ENCODE measurements at regions of chr3 and their contacts with region 1.

Region 1: GRCh38 chr3:46923559-46924350 is 46.2 kb downstream of the PTH1R start:
- DNase-seq: peak; percentile 62
- H3K4me3 Mint-ChIP-seq: no peak overlapping the region
- H3K27ac Mint-ChIP-seq: peak overlapping the region; percentile 64
- H3K4me1 Mint-ChIP-seq: peaks cover 41% of the 10 kb centered on the region
- H3K27me3 Mint-ChIP-seq: no peaks in the 10 kb centered on the region

Region 2: DNA sequence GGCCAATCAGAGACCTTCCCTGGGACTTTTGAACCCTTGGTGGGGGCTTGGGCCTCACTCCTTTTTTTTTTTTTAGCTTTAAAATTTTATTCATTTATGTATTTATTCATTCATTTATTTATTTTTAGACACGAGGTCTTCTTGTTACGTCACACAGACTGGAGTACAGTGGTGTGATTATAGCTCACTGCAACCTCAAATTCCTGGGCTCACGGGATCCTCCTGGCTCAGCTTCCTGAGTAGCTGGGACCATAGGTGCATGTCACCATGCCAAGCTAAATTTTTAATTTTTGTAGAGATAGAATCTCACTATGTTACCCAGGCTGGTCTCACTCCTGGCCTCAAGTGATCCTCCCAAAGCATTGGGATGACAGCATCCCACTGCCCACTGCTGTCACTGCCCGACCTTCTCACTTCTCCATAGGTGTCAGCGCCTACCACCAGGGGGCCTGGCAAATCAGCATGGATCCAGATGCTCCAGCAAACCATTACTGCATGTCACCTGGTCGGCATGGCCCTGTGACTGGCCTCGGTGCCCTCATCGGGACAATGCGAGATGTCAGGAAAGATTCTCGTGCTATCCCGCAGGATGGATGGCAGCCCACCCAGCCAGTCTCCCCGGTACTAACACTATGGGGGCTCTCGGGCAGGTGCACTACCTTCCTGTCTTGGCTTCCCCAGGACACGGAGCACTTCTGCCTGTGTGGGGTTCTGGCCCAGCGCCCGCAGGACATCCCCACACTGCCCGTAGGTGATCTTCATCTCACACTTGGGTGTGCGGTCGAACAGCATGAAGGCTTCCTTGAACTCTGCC is 63.5 kb before region 1 on chr3:
- CTCF ChIA-PET with region 1: no interaction called
- DNase-seq: peak; percentile 52
- H3K4me3 Mint-ChIP-seq: no peak overlapping the region
- H3K27ac Mint-ChIP-seq: no peak overlapping the region
- H3K4me1 Mint-ChIP-seq: no peaks in the 10 kb centered on the region
- H3K27me3 Mint-ChIP-seq: peaks cover 42% of the 10 kb centered on the region

Region 3: DNA sequence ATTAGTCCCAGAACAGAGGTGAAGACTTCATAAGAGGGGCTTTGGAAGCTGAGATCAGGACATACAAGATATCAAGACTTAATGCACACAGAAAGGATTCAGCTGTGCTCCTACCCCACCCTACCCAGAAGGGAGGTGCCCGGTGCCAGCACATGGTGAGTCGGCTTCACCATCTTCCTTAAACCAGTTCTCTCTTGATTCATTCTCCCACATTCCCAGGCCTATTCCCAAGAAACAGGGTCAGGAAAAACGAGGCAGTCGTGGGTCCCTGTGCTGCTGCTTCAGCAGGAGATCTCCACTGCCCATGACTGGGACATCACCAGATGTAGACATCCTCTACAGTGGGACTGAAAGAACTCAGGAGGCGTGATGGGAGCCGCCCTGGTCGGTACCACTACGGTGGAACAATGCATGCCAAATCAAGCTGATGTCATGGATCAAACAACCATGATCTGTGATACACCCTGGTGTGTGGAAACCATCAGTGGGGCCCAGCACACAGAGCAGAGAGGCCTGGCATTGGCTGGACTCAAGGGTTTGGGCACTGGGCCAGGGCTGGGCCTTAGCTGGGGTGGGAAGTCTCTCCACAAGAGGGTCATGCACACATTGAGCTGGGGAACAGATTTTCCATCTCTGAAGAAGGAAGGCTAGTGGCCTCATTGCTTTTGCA is 10.9 kb after region 1 on chr3:
- CTCF ChIA-PET with region 1: interaction called, 11 read pairs
- DNase-seq: no peak
- H3K4me3 Mint-ChIP-seq: no peak overlapping the region
- H3K27ac Mint-ChIP-seq: no peak overlapping the region
- H3K4me1 Mint-ChIP-seq: peaks cover 50% of the 10 kb centered on the region
- H3K27me3 Mint-ChIP-seq: no peaks in the 10 kb centered on the region

Region 4: DNA sequence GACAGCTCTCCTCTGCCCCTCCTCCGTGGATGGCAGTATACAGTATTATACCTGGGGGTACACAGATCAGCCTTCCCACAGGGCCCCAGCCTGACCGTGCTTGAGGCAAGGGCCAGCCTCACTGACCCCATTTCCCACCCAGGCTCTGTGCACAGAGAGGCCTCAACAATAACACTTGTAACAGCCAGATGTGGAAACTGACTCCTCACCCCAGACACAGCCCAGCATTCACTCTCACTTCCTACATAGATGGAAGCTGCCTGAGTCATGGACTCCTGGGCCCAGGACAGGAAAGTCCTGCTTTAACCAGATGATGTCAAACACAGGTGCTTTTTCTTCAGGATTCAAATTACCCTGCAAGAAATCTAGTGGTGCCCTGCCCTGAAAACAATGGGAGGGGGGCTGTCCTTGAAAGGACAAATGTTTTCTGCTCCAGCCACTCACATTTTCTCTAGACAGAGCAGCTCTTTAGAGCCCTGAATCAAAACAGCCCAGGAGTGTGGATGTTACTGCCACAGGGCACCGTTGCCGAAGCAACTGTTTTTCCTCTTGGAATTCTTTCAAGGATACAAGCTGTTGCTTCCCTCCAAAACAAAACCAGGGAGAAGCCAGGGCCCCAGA is 36.4 kb after region 1 on chr3:
- CTCF ChIA-PET with region 1: interaction called, 10 read pairs
- DNase-seq: no peak
- H3K4me3 Mint-ChIP-seq: no peak overlapping the region
- H3K27ac Mint-ChIP-seq: peak overlapping the region; percentile 25
- H3K4me1 Mint-ChIP-seq: peaks cover 60% of the 10 kb centered on the region
- H3K27me3 Mint-ChIP-seq: no peaks in the 10 kb centered on the region

Region 5: GRCh38 chr3:46976326-46977190 is 52.8 kb after region 1 on chr3 and contains the start of gene CCDC12:
- CTCF ChIA-PET with region 1: interaction called, 10 read pairs
- DNase-seq: peak; percentile 96
- H3K4me3 Mint-ChIP-seq: peak within 1 kb of the TSS; percentile 98
- H3K27ac Mint-ChIP-seq: peak within 1 kb of the TSS; percentile 95
- H3K4me1 Mint-ChIP-seq: peaks cover 74% of the 10 kb centered on the region
- H3K27me3 Mint-ChIP-seq: peaks cover 5% of the 10 kb centered on the region

Region 6: DNA sequence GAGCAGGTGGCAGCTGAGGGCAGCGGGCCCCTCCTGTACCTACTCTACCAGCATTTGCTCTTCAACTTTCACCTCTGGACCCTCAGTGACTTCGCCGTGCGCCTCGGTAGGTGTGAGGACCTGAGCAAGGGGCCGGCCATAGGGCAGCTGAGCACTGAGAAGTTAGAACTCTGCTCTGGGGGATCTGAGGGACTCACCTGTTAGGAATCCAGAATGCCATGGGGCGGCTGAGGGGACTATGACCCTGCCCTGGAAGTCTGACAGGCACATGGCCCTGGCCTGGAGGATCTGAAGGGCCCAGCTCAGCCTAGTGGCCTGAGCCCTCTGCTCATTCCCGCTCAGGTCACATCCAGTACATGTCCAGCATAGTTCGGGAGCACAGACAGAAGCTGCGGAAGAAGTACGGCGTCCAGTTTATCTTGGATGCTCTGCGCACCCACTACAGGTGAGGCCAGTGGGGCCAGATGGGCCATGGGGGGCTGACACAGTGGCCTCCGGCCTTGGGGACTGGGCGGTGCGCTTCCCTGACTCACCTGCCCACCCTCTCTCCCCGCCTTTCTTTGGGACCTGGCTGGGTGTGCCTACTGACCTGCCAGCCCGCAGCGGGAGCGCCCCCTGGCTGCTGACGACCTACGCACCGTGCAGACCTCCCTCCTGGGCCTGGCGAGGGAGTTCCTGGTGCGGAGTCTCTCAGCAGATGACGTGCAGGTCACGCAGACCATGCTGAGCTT is 74.5 kb after region 1 on chr3:
- CTCF ChIA-PET with region 1: interaction called, 28 read pairs
- DNase-seq: peak; percentile 81
- H3K4me3 Mint-ChIP-seq: no peak overlapping the region
- H3K27ac Mint-ChIP-seq: no peak overlapping the region
- H3K4me1 Mint-ChIP-seq: peaks cover 9% of the 10 kb centered on the region
- H3K27me3 Mint-ChIP-seq: no peaks in the 10 kb centered on the region